A549 (cell line): ENCODE measurements at regions of chr4 and their contacts with region 1.

Region 1: GRCh38 chr4:128528793-128529553 is 241.4 kb upstream of the PGRMC2 start:
- DNase-seq: peak; percentile 78 to 95
- ATAC-seq: peak; percentile 97 to 99
- H3K4me3 ChIP-seq: no peak overlapping the region
- H3K27ac ChIP-seq: peak overlapping the region; percentile 95 to 99
- H3K4me1 ChIP-seq: peaks cover 59% of the 10 kb centered on the region
- CTCF ChIP-seq: no peak
- EP300 ChIP-seq: peak; percentile 86 to 92; a peak in 4 of 5 replicates
- POLR2A ChIP-seq: no peak
- RAD21 ChIP-seq: peak; percentile 30 to 42; a peak in 3 of 5 replicates

Region 2: GRCh38 chr4:128333309-128334018 is 195.5 kb before region 1 on chr4:
- CTCF ChIA-PET with region 1: no interaction called
- POLR2A ChIA-PET with region 1: no interaction called
- DNase-seq: no peak
- ATAC-seq: no peak
- H3K4me3 ChIP-seq: no peak overlapping the region
- H3K27ac ChIP-seq: no peak overlapping the region
- H3K4me1 ChIP-seq: peaks cover 6% of the 10 kb centered on the region
- CTCF ChIP-seq: no peak
- EP300 ChIP-seq: no peak
- POLR2A ChIP-seq: no peak
- RAD21 ChIP-seq: no peak

Region 3: GRCh38 chr4:128517739-128518510 is 11.0 kb before region 1 on chr4:
- CTCF ChIA-PET with region 1: interaction called, 3 read pairs
- POLR2A ChIA-PET with region 1: interaction called, 15 read pairs
- DNase-seq: peak; percentile 81 to 93
- ATAC-seq: peak; percentile 97
- H3K4me3 ChIP-seq: no peak overlapping the region
- H3K27ac ChIP-seq: peak overlapping the region; percentile 95 to 99
- H3K4me1 ChIP-seq: peaks cover 66% of the 10 kb centered on the region
- CTCF ChIP-seq: no peak
- EP300 ChIP-seq: peak; percentile 79 to 81; a peak in 4 of 5 replicates
- POLR2A ChIP-seq: no peak
- RAD21 ChIP-seq: peak; percentile 9 to 42; a peak in 2 of 5 replicates

Region 4: DNA sequence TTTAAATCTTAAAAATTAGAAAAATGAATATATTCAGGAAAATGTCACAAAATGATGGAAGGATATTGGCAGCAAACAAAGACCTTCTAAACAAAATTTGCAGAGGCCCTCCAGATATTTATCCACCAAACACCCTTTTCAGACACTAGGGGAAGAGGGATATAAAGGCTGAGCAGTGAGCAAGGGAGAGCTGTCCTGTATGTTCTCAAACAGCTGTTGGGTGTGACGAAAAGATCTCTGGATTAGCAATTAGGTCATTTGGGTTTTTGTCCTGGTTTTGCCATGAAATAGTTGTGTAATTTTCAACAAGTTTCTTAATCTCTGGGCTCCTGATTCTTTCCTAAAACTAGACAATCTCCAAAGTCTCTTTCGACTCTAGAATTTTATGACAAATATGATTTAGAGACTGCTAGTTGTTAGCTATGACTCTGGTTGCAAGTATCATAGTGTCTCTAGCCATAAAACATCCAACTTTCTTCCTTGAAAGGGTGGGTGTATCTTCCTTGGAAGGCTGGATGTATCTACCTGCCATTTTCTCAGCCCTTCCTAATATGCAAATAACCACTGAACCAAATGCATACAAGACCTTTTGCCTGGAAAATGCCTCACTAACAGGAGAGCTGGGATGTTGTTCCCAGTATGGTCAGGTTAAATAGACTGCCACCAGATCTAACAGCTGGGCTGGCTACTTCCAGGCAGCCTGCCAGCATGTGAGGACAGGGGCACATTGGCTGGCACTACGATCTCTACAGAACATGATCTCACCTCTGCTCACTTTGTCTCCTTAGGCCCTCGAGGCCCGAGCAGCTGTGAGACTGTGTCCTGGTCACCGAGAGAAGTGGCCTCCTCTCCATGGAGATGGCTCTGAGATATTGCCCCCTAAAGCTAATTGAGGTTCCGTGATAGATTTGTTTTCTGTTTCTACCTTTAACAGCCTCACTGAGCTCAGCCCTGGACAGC is 55.1 kb after region 1 on chr4:
- CTCF ChIA-PET with region 1: no interaction called
- POLR2A ChIA-PET with region 1: no interaction called
- DNase-seq: no peak
- ATAC-seq: no peak
- H3K4me3 ChIP-seq: no peak overlapping the region
- H3K27ac ChIP-seq: peak overlapping the region; percentile 43 to 71; a peak in 5 of 6 replicates
- H3K4me1 ChIP-seq: peaks cover 16% of the 10 kb centered on the region; the same call in 1 of the 3 replicates
- CTCF ChIP-seq: no peak
- EP300 ChIP-seq: no peak
- POLR2A ChIP-seq: no peak
- RAD21 ChIP-seq: no peak